ENCODE measurements at regions of chr6 and their contacts with region 1.

Region 1: GRCh38 chr6:27864906-27865849 is 47.0 kb downstream of the OR2B2 start:
- DNase-seq: peak; percentile 73
- ATAC-seq: peak; percentile 51
- H3K4me3 Mint-ChIP-seq: peak overlapping the region; percentile 97
- H3K27ac Mint-ChIP-seq: peak overlapping the region; percentile 100
- H3K4me1 Mint-ChIP-seq: peaks cover 25% of the 10 kb centered on the region
- H3K27me3 Mint-ChIP-seq: peaks cover 4% of the 10 kb centered on the region; the same call in 1 of the 2 replicates
- CTCF ChIP-seq: no peak

Region 2: DNA sequence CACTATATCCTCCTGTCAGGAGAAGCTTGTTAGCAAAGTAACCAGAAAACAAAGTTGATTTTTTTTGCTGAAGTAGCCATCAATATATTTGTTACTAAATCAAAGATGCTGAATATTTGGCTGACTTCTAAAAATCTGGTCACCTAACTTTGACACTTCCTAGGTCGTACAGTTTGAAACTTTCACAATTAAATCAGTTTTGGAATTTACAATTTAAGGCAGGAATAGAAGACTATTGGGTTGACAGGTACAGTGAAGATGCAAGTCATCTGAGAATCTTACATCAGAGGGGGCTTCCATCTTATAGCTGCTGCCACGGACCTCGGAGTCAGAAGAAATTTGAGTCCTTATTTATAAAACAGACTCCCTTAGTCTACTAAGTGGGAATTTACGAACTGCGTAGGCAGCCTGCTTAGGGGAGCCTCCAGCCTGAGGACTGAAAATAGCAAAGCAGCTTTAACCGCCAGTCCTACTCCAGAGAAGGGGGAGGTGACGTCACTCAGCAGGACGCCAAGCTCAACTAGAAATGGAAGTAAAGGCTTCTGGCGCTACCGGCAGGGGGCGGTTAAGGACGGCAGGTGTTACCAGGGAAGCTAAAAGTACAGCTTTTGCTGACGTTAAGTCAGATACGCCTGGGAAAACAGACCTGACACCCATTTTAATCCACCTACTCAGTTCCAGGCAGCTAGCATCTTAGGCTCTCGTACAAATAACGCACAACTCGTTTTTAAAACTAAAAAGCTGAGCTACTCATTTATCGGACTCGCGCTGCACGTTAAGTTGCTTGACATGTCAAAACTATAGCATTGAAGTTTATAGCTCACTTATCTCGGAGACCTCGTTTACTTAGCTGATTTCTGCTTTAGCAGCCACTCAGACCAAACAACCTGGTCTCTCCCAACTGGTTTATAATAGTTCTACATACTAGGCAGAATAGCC is 1839.0 kb before region 1 on chr6:
- CTCF ChIA-PET with region 1: no interaction called
- POLR2A ChIA-PET with region 1: interaction called, 64 read pairs
- DNase-seq: peak; percentile 95
- ATAC-seq: peak; percentile 12
- H3K4me3 Mint-ChIP-seq: peak overlapping the region; percentile 92
- H3K27ac Mint-ChIP-seq: peak overlapping the region; percentile 98
- H3K4me1 Mint-ChIP-seq: peaks cover 73% of the 10 kb centered on the region
- H3K27me3 Mint-ChIP-seq: no peaks in the 10 kb centered on the region
- CTCF ChIP-seq: peak; percentile 60

Region 3: DNA sequence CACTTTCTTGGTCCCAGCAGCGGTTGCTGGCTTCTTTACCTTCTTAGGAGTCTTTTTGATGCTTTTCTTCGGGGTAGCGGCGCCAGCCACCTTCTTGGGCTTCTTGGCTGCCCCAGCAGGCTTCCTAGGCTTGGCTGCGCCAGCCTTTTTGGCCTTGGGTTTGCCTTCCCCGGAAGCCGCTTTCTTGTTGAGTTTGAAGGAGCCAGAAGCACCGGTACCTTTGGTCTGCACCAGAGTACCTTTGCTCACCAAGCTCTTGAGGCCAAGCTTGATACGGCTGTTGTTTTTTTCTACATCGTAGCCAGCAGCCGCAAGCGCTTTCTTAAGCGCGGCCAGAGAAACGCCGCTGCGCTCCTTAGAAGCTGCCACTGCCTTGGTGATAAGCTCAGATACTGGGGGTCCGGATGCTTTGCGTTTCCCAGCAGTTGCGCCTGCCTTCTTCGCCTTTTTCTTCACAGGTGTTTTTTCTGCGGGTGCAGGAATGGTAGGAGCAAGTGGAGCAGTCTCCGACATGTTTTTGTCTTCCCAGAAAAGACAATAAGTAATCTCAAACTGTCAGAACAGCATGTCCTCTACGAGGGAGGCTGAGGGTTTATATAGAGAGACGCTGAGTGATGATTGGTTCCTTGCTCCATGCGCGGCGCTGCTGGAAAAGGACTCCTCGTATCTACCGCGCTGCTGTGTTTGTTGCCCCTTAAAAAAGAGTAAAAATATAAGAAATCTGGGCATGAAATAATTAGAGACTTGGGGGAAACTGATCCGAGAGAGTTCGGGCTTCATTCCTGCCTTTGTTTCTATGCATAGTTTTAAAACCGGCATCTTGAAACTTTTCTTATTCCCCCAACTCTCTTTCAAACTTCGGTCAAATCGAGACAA is 1630.5 kb before region 1 on chr6:
- CTCF ChIA-PET with region 1: no interaction called
- POLR2A ChIA-PET with region 1: interaction called, 17 read pairs
- DNase-seq: no peak
- ATAC-seq: peak; percentile 70
- H3K4me3 Mint-ChIP-seq: peak overlapping the region; percentile 94
- H3K27ac Mint-ChIP-seq: peak overlapping the region; percentile 99
- H3K4me1 Mint-ChIP-seq: peaks cover 33% of the 10 kb centered on the region
- H3K27me3 Mint-ChIP-seq: no peaks in the 10 kb centered on the region
- CTCF ChIP-seq: no peak

Region 4: GRCh38 chr6:27809939-27810767 is 55.0 kb before region 1 on chr6:
- CTCF ChIA-PET with region 1: no interaction called
- POLR2A ChIA-PET with region 1: interaction called, 434 read pairs
- DNase-seq: peak; percentile 58
- ATAC-seq: peak; percentile 7
- H3K4me3 Mint-ChIP-seq: peak overlapping the region; percentile 98
- H3K27ac Mint-ChIP-seq: peak overlapping the region; percentile 98
- H3K4me1 Mint-ChIP-seq: peaks cover 45% of the 10 kb centered on the region
- H3K27me3 Mint-ChIP-seq: peaks cover 3% of the 10 kb centered on the region
- CTCF ChIP-seq: no peak

Region 5: GRCh38 chr6:27838058-27838944 is 26.9 kb before region 1 on chr6:
- CTCF ChIA-PET with region 1: interaction called, 12 read pairs
- POLR2A ChIA-PET with region 1: interaction called, 729 read pairs
- DNase-seq: peak; percentile 84
- ATAC-seq: peak; percentile 84
- H3K4me3 Mint-ChIP-seq: no peak overlapping the region
- H3K27ac Mint-ChIP-seq: no peak overlapping the region
- H3K4me1 Mint-ChIP-seq: peaks cover 28% of the 10 kb centered on the region
- H3K27me3 Mint-ChIP-seq: no peaks in the 10 kb centered on the region
- CTCF ChIP-seq: no peak

Region 6: GRCh38 chr6:27854421-27854820 is 10.8 kb before region 1 on chr6:
- CTCF ChIA-PET with region 1: interaction called, 3 read pairs
- POLR2A ChIA-PET with region 1: interaction called, 27 read pairs
- DNase-seq: no peak
- ATAC-seq: no peak
- H3K4me3 Mint-ChIP-seq: no peak overlapping the region
- H3K27ac Mint-ChIP-seq: no peak overlapping the region
- H3K4me1 Mint-ChIP-seq: peaks cover 10% of the 10 kb centered on the region
- H3K27me3 Mint-ChIP-seq: no peaks in the 10 kb centered on the region
- CTCF ChIP-seq: no peak

Region 7: GRCh38 chr6:28107506-28107905 is 242.3 kb after region 1 on chr6:
- CTCF ChIA-PET with region 1: no interaction called
- POLR2A ChIA-PET with region 1: no interaction called
- DNase-seq: no peak
- ATAC-seq: no peak
- H3K4me3 Mint-ChIP-seq: no peak overlapping the region
- H3K27ac Mint-ChIP-seq: no peak overlapping the region
- H3K4me1 Mint-ChIP-seq: peaks cover 5% of the 10 kb centered on the region; the same call in 1 of the 2 replicates
- H3K27me3 Mint-ChIP-seq: peaks cover 47% of the 10 kb centered on the region
- CTCF ChIP-seq: no peak